Posterior cingulate gyrus (tissue), 11 donors: ENCODE measurements at regions of chr5 and their contacts with region 1.

Region 1: DNA sequence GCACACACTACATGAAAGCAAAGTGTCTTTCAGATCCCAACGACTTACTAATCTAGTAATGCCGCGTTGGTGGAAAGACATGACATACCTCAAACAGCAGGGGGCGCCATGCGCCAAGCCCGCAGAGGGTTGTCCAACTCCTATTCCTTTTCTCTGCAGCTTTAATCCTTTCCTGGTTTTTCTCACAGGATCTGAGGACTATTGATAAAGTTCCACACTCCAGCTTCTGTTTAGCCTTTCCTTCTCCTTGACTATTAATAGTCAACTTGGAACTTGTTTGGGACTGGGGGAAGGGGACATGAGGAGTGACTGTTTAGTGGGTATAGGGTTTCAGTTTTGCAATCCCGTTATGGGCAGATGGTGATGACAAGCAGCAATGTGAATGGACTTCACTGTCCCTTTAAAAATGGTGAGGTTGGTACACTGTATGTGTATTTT is 62.9 kb downstream of the OTULIN start:
- DNase-seq: peak; percentile 83 to 99 (median 89)

Region 2: DNA sequence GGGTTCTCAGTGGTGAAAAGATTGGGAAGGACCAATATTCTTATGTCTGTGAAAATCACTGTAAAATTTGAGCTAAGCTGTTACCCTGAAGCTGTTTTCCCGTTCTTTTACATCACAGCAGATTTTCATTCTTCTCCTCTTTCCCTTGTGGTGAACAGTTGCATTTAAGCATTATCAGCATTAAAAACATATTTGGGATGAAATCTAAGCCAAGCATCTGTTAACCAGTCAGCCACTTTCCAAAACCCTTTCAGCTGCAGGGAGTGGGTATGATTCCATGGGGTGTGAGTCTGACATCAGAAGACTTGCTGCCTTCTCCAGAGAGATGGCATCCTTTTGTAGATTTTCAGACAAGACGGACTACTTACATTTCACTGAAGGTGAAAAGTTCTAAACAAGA is 487.1 kb before region 1 on chr5:
- intact Hi-C with region 1: no loop called
- DNase-seq: no peak

Region 3: DNA sequence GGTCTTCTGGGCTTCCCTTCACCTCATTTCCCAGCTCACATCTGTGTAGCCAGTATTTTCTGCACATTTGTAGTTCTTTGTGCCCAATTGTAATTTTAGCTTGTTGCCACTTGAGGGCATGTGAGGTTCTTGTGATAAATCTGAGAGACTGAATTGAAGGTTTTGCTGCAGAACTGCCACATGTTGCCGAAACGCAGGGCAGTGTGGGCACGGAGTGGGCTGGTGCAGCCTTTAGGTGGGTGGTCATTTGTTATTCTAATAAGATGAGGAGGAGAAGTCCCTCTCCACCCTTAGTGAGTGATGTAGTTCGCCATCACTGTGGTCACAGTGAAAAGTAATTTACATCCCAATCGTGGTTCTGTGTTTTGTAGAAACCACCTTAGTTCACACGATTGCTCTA is 41.7 kb before region 1 on chr5:
- intact Hi-C with region 1: loop called (anchors 5 kb)
- DNase-seq: peak in 3 of 10 donors; percentile 44 to 87 (median 67)